ENCODE measurements at regions of chr16 and their contacts with region 1.

Region 1: DNA sequence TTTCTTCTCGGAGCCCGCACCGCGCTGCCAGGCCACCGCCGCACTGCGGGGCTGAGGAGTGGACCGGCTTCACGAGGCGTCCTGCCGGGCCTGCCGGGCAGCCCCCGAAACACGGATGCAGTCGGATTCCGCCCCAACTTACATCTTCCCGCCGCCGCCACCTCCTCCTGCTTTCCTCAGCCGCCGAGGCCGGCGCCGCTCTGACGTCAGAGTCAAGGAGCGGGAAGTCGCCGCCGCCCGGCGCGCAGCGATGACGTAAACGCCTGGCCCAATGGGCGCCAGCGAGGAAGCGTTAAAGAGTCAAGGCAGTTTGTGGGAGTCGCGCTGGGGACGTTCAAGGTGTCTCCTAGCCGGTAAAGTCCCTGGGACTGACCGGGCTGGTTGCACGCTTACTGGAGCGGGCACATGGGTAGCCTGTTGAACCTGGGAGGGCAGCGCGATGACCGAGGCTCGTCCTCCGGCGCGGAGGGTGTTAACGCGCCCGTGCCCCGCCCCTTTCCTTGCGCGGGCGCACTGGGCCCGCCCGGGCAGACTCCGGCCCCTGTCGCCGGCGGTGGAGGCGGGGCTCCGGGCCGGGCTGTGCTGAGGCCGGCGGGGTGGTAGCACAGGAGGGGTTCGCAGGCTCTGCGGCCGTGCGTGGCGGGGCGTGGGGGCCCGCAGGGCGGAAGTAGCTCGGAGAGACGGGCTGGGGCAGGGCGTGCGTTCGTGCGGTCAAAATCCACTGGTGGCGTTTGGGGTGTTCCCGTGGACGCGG is at the start of gene RNPS1:
- DNase-seq: peak; percentile 98
- ATAC-seq: peak; percentile 86
- H3K4me3 Mint-ChIP-seq: peak within 1 kb of the TSS; percentile 92
- H3K27ac Mint-ChIP-seq: peak within 1 kb of the TSS; percentile 96
- H3K4me1 Mint-ChIP-seq: peaks cover 34% of the 10 kb centered on the region
- H3K27me3 Mint-ChIP-seq: no peaks in the 10 kb centered on the region
- total RNA-seq, gene RNPS1: 327 to 445 TPM

Region 2: DNA sequence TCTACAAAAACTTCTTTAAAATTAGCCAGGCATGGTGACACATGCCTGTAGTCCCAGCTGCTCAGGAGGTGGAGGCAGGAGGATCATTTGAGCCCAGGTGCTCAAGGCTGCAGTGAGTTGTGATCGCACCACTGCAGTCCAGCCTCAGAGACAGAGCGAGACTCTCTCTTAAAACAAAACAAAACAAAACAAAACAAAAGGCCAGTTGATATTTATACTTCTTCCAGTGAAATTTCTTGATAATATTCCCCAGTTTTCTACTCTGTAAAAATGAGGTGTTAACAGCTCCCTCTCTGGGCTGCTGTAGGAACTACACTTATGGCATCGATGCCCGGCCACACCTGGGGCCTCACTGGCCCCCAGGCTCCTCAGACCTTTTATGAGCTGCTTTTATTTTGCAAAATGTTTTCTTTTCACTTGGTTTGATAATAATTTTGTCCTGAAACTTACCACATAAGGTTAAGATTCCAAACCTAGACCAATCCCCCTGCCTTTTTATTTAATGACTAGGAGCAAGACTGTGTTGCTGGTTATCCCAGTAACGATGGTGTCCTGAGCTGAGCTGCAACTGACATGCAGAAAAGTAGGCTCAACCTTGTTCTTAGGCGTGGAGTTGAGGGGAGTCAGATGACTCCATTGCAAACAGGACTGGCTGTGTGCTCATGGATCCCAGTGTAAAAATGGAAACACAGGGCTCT is 544.5 kb before region 1 on chr16:
- CTCF ChIA-PET with region 1: no interaction called
- POLR2A ChIA-PET with region 1: no interaction called
- intact Hi-C with region 1: no loop called
- DNase-seq: peak; percentile 63
- ATAC-seq: peak; percentile 48
- H3K4me3 Mint-ChIP-seq: no peak overlapping the region
- H3K27ac Mint-ChIP-seq: no peak overlapping the region
- H3K4me1 Mint-ChIP-seq: peaks cover 28% of the 10 kb centered on the region
- H3K27me3 Mint-ChIP-seq: no peaks in the 10 kb centered on the region

Region 3: GRCh38 chr16:1826691-1827575 is 441.2 kb before region 1 on chr16 and contains the starts of genes FAHD1 and HAGH:
- CTCF ChIA-PET with region 1: no interaction called
- POLR2A ChIA-PET with region 1: no interaction called
- intact Hi-C with region 1: loop called in 1 of 2 experiments (anchors 1 kb)
- DNase-seq: peak; percentile 93
- ATAC-seq: peak; percentile 90
- H3K4me3 Mint-ChIP-seq: peak within 1 kb of the TSS; percentile 91
- H3K27ac Mint-ChIP-seq: peak within 1 kb of the TSS; percentile 89
- H3K4me1 Mint-ChIP-seq: peaks cover 27% of the 10 kb centered on the region
- H3K27me3 Mint-ChIP-seq: no peaks in the 10 kb centered on the region
- total RNA-seq, gene FAHD1: 11.6 to 11.9 TPM
- total RNA-seq, gene HAGH: 20.9 to 25.0 TPM

Region 4: DNA sequence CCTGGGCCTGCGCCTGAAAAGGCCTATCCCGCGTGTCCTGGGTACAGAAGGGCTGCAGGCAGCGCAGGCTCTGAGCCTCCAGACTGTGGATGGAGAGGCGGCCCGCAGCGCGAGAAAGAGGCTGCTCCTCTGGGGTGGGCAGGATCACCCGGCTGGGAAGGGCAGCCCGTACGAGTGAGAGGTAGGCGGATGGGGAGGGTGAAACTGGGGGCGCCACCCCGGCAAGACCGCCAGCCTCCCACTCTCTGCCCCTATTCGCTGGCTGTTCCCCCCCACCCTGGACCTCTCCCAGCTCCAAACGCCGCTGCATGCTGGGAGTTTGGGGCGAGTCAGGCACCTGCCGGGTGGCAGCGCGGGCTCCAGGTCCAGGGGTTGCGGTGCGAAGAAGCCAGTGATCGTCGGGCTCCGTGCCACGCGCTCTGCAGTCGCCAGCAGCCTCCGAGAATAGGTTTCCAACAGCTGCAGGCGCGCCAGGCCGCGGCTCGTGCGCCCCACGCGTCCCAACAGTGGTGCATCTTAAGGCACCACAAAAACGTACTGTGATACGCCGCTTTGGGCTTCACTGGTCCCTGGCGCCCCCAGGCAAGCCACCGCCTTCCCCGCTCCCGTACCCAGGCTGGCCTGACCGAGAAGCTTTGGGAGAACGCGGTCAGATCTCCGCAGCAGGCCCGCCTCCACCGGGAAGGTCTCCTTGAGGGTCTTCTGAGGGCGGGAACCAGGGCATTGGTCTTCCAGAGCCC is 287.9 kb before region 1 on chr16:
- CTCF ChIA-PET with region 1: no interaction called
- POLR2A ChIA-PET with region 1: no interaction called
- intact Hi-C with region 1: no loop called
- DNase-seq: peak; percentile 38
- ATAC-seq: no peak
- H3K4me3 Mint-ChIP-seq: no peak overlapping the region
- H3K27ac Mint-ChIP-seq: no peak overlapping the region
- H3K4me1 Mint-ChIP-seq: peaks cover 16% of the 10 kb centered on the region
- H3K27me3 Mint-ChIP-seq: peaks cover 17% of the 10 kb centered on the region

Region 5: GRCh38 chr16:2047330-2048115 is 220.6 kb before region 1 on chr16 and contains the starts of genes NTHL1 and TSC2:
- CTCF ChIA-PET with region 1: no interaction called
- POLR2A ChIA-PET with region 1: no interaction called
- intact Hi-C with region 1: loop called in 1 of 2 experiments (anchors 1 kb)
- DNase-seq: peak; percentile 97
- ATAC-seq: peak; percentile 97
- H3K4me3 Mint-ChIP-seq: peak within 1 kb of the TSS; percentile 89
- H3K27ac Mint-ChIP-seq: peak within 1 kb of the TSS; percentile 85
- H3K4me1 Mint-ChIP-seq: peaks cover 18% of the 10 kb centered on the region
- H3K27me3 Mint-ChIP-seq: no peaks in the 10 kb centered on the region
- total RNA-seq, gene NTHL1: 22.6 to 26.1 TPM
- total RNA-seq, gene TSC2: 49.6 to 72.9 TPM

Region 6: DNA sequence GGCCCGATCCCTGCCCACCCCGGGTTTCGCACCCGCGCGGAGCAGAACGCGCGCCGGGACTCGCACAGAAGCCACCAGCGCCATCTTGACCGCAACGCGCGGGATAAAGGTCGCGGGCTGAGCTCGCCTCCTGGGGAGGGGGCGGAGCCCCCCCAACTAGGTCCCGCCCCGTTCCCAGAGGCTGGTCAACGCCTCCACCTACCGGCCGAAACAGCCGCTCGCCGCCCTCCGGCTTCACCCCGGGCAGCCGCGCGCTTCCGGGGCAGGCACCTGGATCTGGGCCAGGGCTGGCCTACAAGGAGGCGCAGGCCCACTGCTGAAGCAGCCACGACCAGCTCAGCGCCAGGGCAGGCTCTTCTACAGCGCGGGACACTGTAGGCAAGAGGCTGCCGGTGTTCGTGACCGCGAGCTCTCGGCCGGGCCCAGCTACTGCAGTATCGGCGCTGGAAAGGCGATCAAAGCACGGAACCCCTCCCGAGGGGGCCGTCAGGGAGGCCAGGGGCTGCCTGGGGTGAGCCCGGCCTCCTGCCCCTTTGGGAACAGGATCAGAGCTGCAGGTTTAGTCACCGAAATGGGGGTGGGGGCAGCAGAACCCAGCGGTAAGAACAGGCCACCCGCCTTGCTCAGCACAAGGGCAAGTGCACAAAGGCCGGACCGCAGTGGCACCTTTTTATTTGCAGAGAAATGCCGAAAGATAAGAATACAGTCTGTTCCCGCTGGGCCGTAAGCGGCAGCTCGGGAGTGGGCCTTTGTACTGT is 16.4 kb before region 1 on chr16 and contains the start of gene ECI1:
- CTCF ChIA-PET with region 1: interaction called, 10 read pairs
- POLR2A ChIA-PET with region 1: interaction called, 27 read pairs
- intact Hi-C with region 1: loop called (anchors 1 to 2 kb)
- DNase-seq: peak; percentile 92
- ATAC-seq: peak; percentile 87
- H3K4me3 Mint-ChIP-seq: peak within 1 kb of the TSS; percentile 90
- H3K27ac Mint-ChIP-seq: peak within 1 kb of the TSS; percentile 90
- H3K4me1 Mint-ChIP-seq: peaks cover 5% of the 10 kb centered on the region
- H3K27me3 Mint-ChIP-seq: no peaks in the 10 kb centered on the region
- total RNA-seq, gene ECI1: 23.0 to 41.0 TPM

Region 7: DNA sequence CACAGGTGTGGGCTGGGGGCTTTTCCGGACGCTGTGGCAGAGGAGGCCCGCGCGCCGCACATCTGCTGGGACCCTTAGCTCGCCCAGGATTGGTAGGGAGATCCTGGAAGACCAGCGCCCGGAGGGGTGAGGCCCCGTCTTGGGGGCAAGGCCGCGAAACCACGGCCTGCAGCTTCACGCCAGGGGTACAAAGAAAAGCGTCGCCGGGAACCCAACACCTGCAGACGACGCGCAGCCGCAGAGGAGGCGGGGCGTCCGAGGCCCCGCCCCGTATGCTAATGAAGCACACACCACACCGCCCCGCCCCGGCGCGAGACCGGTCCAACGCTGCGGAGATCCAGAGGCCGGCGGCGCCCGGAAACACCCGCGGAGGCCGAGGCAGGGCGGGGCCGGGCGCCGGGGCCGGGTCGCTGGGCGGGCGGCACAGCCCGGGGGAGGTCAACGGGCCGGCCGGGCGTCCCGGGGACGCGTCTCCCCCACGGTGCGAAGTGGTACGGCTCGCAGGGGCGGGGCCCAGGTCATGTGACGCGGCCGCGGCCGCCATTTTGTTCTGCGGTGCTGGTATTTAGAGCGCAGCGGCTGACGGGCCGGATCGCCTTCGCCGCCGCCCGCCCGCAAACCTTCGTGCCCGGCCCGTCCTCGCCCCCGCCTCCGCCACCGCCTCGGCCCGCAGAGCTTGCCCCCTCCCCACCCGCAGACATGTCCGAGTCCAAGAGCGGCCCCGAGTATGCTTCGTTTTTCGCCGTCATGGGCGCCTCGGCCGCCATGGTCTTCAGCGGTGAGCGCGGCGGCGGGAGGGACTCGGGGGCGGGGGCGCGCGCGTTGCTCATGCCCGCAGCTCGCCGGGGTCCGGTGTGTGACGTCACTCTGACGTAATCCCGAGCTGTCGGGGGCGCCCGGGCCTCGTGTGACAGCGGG is 245.6 kb after region 1 on chr16 and contains the start of gene ATP6V0C:
- CTCF ChIA-PET with region 1: no interaction called
- POLR2A ChIA-PET with region 1: no interaction called
- intact Hi-C with region 1: loop called in 1 of 2 experiments (anchors 1 kb)
- DNase-seq: peak; percentile 95
- ATAC-seq: peak; percentile 90
- H3K4me3 Mint-ChIP-seq: peak within 1 kb of the TSS; percentile 93
- H3K27ac Mint-ChIP-seq: peak within 1 kb of the TSS; percentile 95
- H3K4me1 Mint-ChIP-seq: peaks cover 44% of the 10 kb centered on the region
- H3K27me3 Mint-ChIP-seq: no peaks in the 10 kb centered on the region
- total RNA-seq, gene ATP6V0C: 91.7 to 130 TPM

Region 8: GRCh38 chr16:2777231-2777902 is 509.3 kb after region 1 on chr16 and contains the start of gene ELOB:
- CTCF ChIA-PET with region 1: no interaction called
- POLR2A ChIA-PET with region 1: no interaction called
- intact Hi-C with region 1: loop called in 1 of 2 experiments (anchors 1 kb)
- DNase-seq: peak; percentile 95
- ATAC-seq: peak; percentile 94
- H3K4me3 Mint-ChIP-seq: peak within 1 kb of the TSS; percentile 95
- H3K27ac Mint-ChIP-seq: peak within 1 kb of the TSS; percentile 96
- H3K4me1 Mint-ChIP-seq: peaks cover 26% of the 10 kb centered on the region
- H3K27me3 Mint-ChIP-seq: no peaks in the 10 kb centered on the region
- total RNA-seq, gene ELOB: 268 to 269 TPM

Measured in activated CD4-positive, alpha-beta T cell treated with anti-CD3 and anti-CD28 coated beads for 36 hours (primary cell).